Psoas muscle (tissue), 8 donors: ENCODE measurements at regions of chr13 and their contacts with region 1.

Region 1: GRCh38 chr13:45464687-45465453 is at the start of gene COG3:
- DNase-seq: peak; percentile 95 to 97
- ATAC-seq: peak; percentile 97 to 99 (median 98)
- H3K4me3 ChIP-seq: peak within 1 kb of the TSS; percentile 92
- H3K27ac ChIP-seq: peak within 1 kb of the TSS; percentile 96
- H3K4me1 ChIP-seq: peaks cover 45% of the 10 kb centered on the region
- H3K27me3 ChIP-seq: no peaks in the 10 kb centered on the region
- CTCF ChIP-seq: peak; percentile 32
- total RNA-seq, gene COG3: 10.1 to 18.5 (median 13.8) TPM

Region 2: DNA sequence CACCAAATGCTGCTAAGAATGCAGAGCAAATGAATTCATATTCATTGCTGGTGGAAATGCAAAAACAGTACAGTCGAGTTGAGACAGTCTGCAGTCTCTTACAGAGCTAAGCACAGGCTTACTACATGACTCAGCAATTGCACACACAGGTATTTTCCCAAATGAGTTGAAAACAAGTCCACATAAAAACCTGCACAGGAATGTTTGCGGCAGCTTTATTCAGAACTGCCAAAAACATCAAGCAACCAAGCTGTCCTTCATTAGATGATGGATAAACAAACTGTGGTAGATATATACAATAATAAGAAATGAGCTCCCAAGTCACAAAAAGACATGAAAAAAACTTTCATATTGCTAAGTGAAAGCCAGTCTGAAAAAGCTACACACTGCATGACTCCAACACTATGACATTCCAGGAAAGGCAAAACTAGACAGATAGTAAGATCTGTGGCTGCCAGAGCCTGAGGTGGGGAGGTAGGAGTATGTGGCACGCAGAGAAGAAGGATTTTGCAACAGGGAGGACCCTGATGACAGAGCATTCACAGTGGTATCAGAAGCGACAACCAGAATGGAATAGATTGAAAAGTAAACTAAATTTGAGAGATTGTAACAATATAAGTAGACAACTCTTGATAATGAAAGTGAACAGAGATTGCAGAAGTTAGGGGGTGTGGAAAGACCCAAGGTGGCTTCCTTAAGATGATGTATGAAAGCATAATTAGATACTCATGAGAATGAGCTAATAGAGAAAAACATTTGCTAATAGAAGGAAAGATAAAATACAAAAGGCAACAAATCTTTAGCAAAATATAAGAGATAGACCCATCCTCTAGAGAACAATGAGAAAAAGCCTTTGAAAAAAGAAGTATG is 941.5 kb before region 1 on chr13:
- intact Hi-C with region 1: no loop called
- DNase-seq: no peak
- ATAC-seq: peak; percentile 56 to 67 (median 58)
- H3K4me3 ChIP-seq: peak overlapping the region; percentile 29
- H3K27ac ChIP-seq: peak overlapping the region; percentile 57
- H3K4me1 ChIP-seq: peaks cover 46% of the 10 kb centered on the region
- H3K27me3 ChIP-seq: no peaks in the 10 kb centered on the region
- CTCF ChIP-seq: no peak

Region 3: GRCh38 chr13:45417790-45418534 is 46.9 kb before region 1 on chr13 and contains the start of gene SLC25A30:
- intact Hi-C with region 1: loop called in 1 of 2 experiments (anchors 5 kb)
- DNase-seq: peak; percentile 96
- ATAC-seq: peak; percentile 94 to 97 (median 95)
- H3K4me3 ChIP-seq: peak within 1 kb of the TSS; percentile 72
- H3K27ac ChIP-seq: peak within 1 kb of the TSS; percentile 84
- H3K4me1 ChIP-seq: peaks cover 32% of the 10 kb centered on the region
- H3K27me3 ChIP-seq: no peaks in the 10 kb centered on the region
- CTCF ChIP-seq: no peak
- total RNA-seq, gene SLC25A30: 21.7 to 69.8 (median 53.4) TPM